ENCODE measurements at regions of chr10 and their contacts with region 1.

Region 1: DNA sequence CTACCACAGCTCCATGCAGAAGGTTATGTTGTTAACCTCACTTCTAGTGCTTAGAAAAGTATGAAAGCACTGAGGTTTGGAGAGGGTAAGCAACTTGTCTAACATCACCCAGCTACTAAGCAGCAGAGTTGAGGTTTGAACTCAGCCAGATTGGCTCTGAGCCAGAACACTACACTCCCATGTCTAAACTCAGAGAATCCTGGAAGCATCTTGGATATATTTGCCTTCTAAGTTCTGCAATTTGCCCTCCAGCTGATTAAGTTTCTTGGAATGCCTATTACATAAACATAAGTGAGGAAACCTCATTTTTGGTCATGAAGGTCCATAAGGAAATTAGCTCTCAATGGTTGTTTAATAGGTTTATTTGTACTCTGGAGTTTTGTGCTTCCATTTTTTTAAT is 78.1 kb upstream of the PHYHIPL start:
- DNase-seq: no peak
- H3K4me3 ChIP-seq: no peak overlapping the region
- H3K27ac ChIP-seq: no peak overlapping the region
- H3K4me1 ChIP-seq: no peaks in the 10 kb centered on the region
- H3K27me3 ChIP-seq: no peaks in the 10 kb centered on the region
- CTCF ChIP-seq: no peak
- POLR2A ChIP-seq: no peak

Region 2: GRCh38 chr10:58993480-58994221 is 104.7 kb before region 1 on chr10:
- intact Hi-C with region 1: loop called (anchors 10 kb)
- DNase-seq: no peak
- H3K4me3 ChIP-seq: no peak overlapping the region
- H3K27ac ChIP-seq: peak overlapping the region in 1 of 2 donors; percentile 1
- H3K4me1 ChIP-seq: no peaks in the 10 kb centered on the region
- H3K27me3 ChIP-seq: no peaks in the 10 kb centered on the region
- CTCF ChIP-seq: no peak
- POLR2A ChIP-seq: no peak

Region 3: DNA sequence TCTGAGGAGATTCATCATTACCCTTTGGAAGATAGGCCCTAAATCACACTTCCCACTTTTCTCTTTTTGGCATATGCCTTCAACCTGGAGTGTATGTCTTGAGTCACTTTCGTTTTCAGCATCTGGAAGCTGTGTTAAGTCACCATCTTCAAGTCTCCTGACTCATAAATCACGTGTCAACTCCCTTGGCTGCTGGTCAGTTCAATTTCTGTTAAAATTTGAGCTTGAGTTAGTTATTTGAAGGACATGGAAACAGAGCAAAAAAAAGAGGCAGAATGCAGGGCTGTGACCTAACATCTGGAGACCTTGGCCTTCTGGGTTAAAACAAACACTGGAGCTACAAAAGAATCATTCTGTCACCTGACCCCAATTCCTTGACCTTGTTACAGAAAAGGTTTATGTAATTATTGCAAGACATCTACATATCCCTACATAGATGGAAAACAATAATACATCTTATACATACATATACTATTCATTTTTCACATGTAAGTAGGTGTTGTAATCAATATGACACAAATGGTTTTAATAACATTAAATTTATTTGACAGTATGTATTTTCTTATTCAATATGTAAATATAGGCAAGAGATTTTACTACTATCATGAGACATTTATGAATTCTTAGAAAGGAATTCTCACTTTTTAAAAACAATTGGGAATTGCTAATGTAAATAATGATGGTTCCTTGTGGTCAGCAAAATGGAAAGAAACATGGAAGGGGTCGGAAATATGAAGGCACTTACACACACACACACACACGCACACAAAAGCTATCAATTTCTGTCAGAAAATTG is 91.7 kb before region 1 on chr10:
- intact Hi-C with region 1: no loop called
- DNase-seq: no peak
- H3K4me3 ChIP-seq: no peak overlapping the region
- H3K27ac ChIP-seq: peak overlapping the region in 1 of 2 donors; percentile 63
- H3K4me1 ChIP-seq: no peaks in the 10 kb centered on the region
- H3K27me3 ChIP-seq: no peaks in the 10 kb centered on the region
- CTCF ChIP-seq: no peak
- POLR2A ChIP-seq: no peak

Measured in prostate gland (tissue), 2 donors.